Activated T-helper 2 cell treated with anti-CD3 and anti-CD28 coated beads, Interferon-gamma antibody, Interleukin-2, Interleukin-4, amounts not matched to agents 10 μg/mL and 5 μg/mL and 100 μg/mL, durations not matched to agents 14 hours and 24 hours and 36 hours (primary cell): ENCODE measurements at regions of chr1 and their contacts with region 1.

Region 1: DNA sequence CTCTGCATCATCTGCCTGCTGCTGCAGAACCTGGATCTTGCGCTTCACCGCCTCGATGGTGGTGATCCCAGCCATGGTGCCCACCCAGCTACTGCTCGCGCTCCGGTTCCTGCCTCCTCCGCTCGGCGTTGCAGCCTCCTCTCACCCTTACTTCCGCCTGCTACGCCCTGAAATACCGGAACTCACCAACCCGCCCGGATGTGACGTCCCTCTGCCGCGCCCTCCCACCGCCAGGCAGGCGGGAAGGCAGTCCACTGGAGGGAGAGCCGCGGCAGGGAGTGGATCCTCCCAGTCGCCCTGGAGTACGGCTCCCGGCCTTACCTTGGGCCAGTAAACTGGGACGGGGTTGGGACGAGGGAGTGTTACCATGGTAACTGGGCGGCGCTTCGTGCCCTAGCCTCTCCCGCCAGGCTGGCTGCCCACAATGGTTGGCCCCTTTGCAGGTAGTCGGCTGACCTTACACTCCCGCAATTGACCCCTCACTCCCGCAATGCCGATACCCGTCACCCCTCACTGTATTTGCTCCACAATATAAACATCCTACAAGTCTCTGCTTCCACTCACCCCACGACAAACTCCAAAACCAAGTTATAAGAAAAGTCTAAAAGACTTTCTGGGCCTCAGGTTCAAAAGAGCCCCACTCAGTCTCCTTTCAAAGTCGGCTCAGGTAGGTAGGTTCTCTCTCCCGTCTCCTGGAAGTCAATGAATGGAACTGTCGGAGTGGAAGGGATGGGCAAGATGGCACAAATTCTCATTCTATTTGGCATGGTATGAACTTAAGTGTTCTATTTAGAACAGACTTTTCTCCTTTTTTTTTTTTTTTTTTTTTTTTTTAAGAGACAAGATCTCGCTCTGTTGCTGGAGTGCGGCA is 8.6 kb downstream of the TPM3 start:
- DNase-seq: peak; percentile 93
- H3K4me3 Mint-ChIP-seq: peak overlapping the region; percentile 99
- H3K27ac Mint-ChIP-seq: peak overlapping the region; percentile 98
- H3K4me1 Mint-ChIP-seq: peaks cover 43% of the 10 kb centered on the region
- H3K27me3 Mint-ChIP-seq: peaks cover 3% of the 10 kb centered on the region

Region 2: DNA sequence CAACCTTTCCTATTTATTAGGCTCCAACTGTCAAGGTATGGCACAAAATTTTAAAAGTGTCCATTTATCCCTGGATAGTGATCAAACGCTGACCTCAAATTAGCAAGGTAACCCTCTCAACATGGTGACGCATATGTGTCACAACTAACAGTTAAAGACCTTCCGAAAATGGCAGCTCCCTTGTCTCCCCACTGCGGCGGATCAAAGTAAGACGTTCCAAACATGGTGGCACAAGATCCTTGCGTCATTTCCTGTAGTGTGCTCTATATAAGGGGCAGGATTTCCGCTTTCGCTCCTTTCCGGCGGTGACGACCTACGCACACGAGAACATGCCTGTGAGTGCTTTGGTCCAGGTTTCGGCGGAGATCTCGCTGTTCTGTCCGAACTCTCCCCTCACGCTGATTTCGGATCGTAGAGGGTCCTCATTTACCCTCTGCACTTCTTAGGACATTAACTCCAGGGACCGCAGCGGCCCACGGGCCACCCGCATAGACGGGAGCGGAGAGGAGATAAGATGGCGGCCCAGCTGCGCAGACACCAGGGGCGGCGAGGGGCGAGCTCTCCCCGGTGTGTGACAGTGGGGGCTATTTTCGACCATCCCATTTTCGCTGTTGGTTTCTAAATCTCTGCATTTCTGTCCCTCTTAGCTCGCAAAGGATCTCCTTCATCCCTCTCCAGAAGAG is 192.7 kb before region 1 on chr1 and contains the start of gene RPS27:
- intact Hi-C with region 1: loop called (anchors 5 kb)
- DNase-seq: peak; percentile 88
- H3K4me3 Mint-ChIP-seq: peak within 1 kb of the TSS; percentile 88
- H3K27ac Mint-ChIP-seq: peak within 1 kb of the TSS; percentile 92
- H3K4me1 Mint-ChIP-seq: peaks cover 39% of the 10 kb centered on the region
- H3K27me3 Mint-ChIP-seq: no peaks in the 10 kb centered on the region
- total RNA-seq, gene RPS27: 1,296 and 1,372 TPM in 2 replicates

Region 3: GRCh38 chr1:154157520-154158306 is 25.6 kb before region 1 on chr1:
- intact Hi-C with region 1: loop called (anchors 1 kb)
- DNase-seq: peak; percentile 79
- H3K4me3 Mint-ChIP-seq: peak overlapping the region; percentile 65
- H3K27ac Mint-ChIP-seq: peak overlapping the region; percentile 86
- H3K4me1 Mint-ChIP-seq: peaks cover 52% of the 10 kb centered on the region
- H3K27me3 Mint-ChIP-seq: no peaks in the 10 kb centered on the region

Region 4: DNA sequence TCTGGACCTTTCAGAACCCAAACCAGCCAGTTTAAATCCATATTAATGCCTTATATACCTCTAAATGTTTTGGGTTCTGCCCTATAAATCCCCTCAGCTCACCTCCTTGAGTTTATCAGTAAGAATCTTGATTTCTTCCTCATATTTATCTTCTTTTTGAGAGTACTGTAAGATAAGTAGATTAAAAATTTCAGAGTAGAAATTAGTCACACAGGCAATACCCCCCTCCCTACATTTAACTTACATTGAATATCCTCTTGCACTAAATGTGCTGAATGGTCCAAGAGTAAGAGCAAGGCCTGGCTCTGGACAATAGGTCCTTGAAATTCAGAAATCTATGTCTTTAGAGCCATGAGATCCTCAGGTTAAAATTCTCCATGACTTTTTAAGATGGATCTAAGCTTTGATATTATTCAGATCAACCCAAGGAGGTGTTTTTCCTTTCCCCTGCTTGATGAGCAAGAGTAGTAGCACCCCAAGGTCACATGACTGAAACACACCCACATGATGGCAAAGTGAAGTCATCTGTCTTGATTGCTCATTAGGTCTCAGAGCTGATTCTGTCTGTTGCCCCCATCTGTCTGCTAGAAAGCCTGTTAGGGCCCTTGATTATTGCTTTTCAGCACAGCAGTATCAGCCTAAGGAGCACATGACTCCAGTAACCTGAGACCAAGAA is 12.6 kb before region 1 on chr1:
- intact Hi-C with region 1: loop called (anchors 1 kb)
- DNase-seq: no peak
- H3K4me3 Mint-ChIP-seq: no peak overlapping the region
- H3K27ac Mint-ChIP-seq: peak overlapping the region; percentile 79
- H3K4me1 Mint-ChIP-seq: peaks cover 36% of the 10 kb centered on the region
- H3K27me3 Mint-ChIP-seq: no peaks in the 10 kb centered on the region

Region 5: GRCh38 chr1:154220071-154220969 is 37.0 kb after region 1 on chr1 and contains the start of gene UBAP2L:
- intact Hi-C with region 1: loop called (anchors 1 kb)
- DNase-seq: peak; percentile 99
- H3K4me3 Mint-ChIP-seq: peak within 1 kb of the TSS; percentile 93
- H3K27ac Mint-ChIP-seq: peak within 1 kb of the TSS; percentile 97
- H3K4me1 Mint-ChIP-seq: peaks cover 55% of the 10 kb centered on the region
- H3K27me3 Mint-ChIP-seq: no peaks in the 10 kb centered on the region
- total RNA-seq, gene UBAP2L: 259 and 263 TPM in 2 replicates

Region 6: GRCh38 chr1:154324669-154325582 is 141.6 kb after region 1 on chr1 and contains the start of gene ATP8B2:
- intact Hi-C with region 1: loop called (anchors 5 kb)
- DNase-seq: peak; percentile 77
- H3K4me3 Mint-ChIP-seq: peak within 1 kb of the TSS; percentile 95
- H3K27ac Mint-ChIP-seq: peak within 1 kb of the TSS; percentile 89
- H3K4me1 Mint-ChIP-seq: peaks cover 33% of the 10 kb centered on the region
- H3K27me3 Mint-ChIP-seq: peaks cover 18% of the 10 kb centered on the region
- total RNA-seq, gene ATP8B2: 44.0 and 47.0 TPM in 2 replicates

Region 7: GRCh38 chr1:154453574-154454352 is 270.5 kb after region 1 on chr1:
- intact Hi-C with region 1: no loop called
- DNase-seq: no peak
- H3K4me3 Mint-ChIP-seq: no peak overlapping the region
- H3K27ac Mint-ChIP-seq: no peak overlapping the region
- H3K4me1 Mint-ChIP-seq: peaks cover 22% of the 10 kb centered on the region
- H3K27me3 Mint-ChIP-seq: peaks cover 37% of the 10 kb centered on the region